MCF 10A (cell line): ENCODE measurements at regions of chr1 and their contacts with region 1.

Region 1: GRCh38 chr1:117758444-117759316 is 152.8 kb downstream of the TENT5C start:
- DNase-seq: peak; percentile 83
- H3K4me3 Mint-ChIP-seq: peak overlapping the region; percentile 76
- H3K27ac Mint-ChIP-seq: no peak overlapping the region
- H3K4me1 Mint-ChIP-seq: peaks cover 11% of the 10 kb centered on the region
- H3K27me3 Mint-ChIP-seq: no peaks in the 10 kb centered on the region
- CTCF ChIP-seq: peak; percentile 84

Region 2: GRCh38 chr1:117512743-117513321 is 245.8 kb before region 1 on chr1:
- CTCF ChIA-PET with region 1: interaction called, 271 read pairs
- POLR2A ChIA-PET with region 1: interaction called, 3 read pairs
- intact Hi-C with region 1: loop called (anchors 1 kb)
- DNase-seq: peak; percentile 32
- H3K4me3 Mint-ChIP-seq: no peak overlapping the region
- H3K27ac Mint-ChIP-seq: no peak overlapping the region
- H3K4me1 Mint-ChIP-seq: no peaks in the 10 kb centered on the region
- H3K27me3 Mint-ChIP-seq: no peaks in the 10 kb centered on the region
- CTCF ChIP-seq: peak; percentile 53

Region 3: GRCh38 chr1:117605774-117606648 is 152.7 kb before region 1 on chr1 and contains the start of gene TENT5C:
- CTCF ChIA-PET with region 1: interaction called, 29 read pairs
- POLR2A ChIA-PET with region 1: interaction called, 4 read pairs
- intact Hi-C with region 1: loop called (anchors 1 kb)
- DNase-seq: peak; percentile 98
- H3K4me3 Mint-ChIP-seq: peak within 1 kb of the TSS; percentile 97
- H3K27ac Mint-ChIP-seq: peak within 1 kb of the TSS; percentile 42
- H3K4me1 Mint-ChIP-seq: no peaks in the 10 kb centered on the region
- H3K27me3 Mint-ChIP-seq: peaks cover 36% of the 10 kb centered on the region
- CTCF ChIP-seq: no peak
- total RNA-seq, gene TENT5C: 0.05 TPM in 1 of 2 replicates, not detected in the other

Region 4: DNA sequence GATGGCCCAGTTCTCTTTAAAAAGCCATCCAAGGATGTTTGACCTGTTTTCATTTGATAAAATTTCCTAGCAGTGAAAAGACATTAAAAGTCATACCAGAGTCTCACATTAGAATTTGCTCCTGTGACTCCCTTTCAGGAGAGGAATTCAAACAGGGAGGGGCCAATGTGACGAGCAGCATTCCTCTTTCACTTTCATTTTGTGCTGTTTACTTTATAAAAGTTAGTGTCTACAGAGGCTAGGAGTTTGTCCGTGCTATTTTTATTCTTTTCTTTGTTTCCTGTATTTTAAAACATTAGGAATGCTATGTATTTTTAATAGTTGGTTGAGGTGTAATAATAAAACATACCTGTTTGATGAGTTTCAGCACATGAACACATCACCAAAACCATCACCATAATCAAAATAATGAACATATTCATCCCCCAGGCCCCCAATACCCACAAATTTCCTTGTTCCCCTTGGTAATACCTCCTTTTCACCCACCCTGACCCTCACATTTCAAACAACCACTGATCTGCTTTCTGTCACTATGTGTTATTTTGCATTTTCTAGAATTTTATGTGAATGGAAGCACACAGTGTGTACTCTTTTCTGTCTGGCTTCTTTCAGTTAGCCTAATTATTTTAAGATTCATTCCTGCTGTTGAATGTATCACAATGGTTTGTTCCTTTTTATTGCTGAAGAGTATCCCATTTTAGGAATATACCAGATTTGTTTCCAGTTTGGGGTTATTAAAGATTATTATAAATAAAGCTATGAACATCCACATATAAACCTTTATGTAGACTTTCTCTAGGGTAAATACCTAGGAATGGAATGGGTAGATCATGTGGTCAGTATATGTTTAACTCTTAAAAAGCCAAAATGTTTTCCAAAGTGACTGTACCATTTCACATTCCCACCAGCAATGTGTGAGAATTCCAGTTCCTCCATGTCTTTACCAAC is 23.4 kb before region 1 on chr1:
- CTCF ChIA-PET with region 1: interaction called, 17 read pairs
- POLR2A ChIA-PET with region 1: no interaction called
- intact Hi-C with region 1: no loop called
- DNase-seq: peak; percentile 50
- H3K4me3 Mint-ChIP-seq: peak overlapping the region; percentile 66
- H3K27ac Mint-ChIP-seq: peak overlapping the region; percentile 91
- H3K4me1 Mint-ChIP-seq: peaks cover 12% of the 10 kb centered on the region
- H3K27me3 Mint-ChIP-seq: no peaks in the 10 kb centered on the region
- CTCF ChIP-seq: no peak

Region 5: GRCh38 chr1:117770981-117771531 is 12.4 kb after region 1 on chr1:
- CTCF ChIA-PET with region 1: interaction called, 23 read pairs
- POLR2A ChIA-PET with region 1: interaction called, 3 read pairs
- intact Hi-C with region 1: no loop called
- DNase-seq: no peak
- H3K4me3 Mint-ChIP-seq: no peak overlapping the region
- H3K27ac Mint-ChIP-seq: no peak overlapping the region
- H3K4me1 Mint-ChIP-seq: no peaks in the 10 kb centered on the region
- H3K27me3 Mint-ChIP-seq: no peaks in the 10 kb centered on the region
- CTCF ChIP-seq: no peak

Region 6: DNA sequence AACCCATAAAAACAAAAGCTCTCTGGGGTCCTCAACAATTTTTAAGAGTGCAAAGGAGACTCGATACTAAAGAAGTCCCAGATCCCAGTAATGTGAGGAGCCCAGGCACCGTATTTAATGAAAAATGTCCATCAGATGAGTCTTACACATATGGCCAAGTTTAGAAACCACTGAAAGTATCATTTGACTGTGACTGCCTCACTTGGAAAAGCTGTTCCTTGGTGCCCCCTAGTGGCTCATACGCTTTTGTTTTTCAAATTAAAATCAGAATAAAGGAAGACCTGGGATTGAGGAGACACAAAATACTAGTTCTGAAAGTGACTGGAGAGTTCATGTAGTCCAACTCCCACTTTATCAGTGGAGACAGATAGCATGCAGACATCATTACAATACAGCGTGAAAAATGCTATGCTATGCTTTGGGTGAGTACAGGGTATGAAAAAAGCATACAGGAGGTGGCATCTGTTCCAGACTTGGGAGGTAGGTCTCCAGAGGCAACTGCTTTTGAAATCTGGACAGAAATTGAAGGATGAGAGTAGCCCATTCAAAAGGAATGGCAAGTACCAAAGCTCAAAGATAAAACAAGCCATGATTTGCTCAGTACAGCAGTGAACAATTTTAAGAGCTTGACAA is 136.9 kb after region 1 on chr1:
- CTCF ChIA-PET with region 1: interaction called, 35 read pairs
- POLR2A ChIA-PET with region 1: no interaction called
- intact Hi-C with region 1: loop called (anchors 1 kb)
- DNase-seq: peak; percentile 78
- H3K4me3 Mint-ChIP-seq: no peak overlapping the region
- H3K27ac Mint-ChIP-seq: no peak overlapping the region
- H3K4me1 Mint-ChIP-seq: no peaks in the 10 kb centered on the region
- H3K27me3 Mint-ChIP-seq: no peaks in the 10 kb centered on the region
- CTCF ChIP-seq: peak; percentile 69

Region 7: DNA sequence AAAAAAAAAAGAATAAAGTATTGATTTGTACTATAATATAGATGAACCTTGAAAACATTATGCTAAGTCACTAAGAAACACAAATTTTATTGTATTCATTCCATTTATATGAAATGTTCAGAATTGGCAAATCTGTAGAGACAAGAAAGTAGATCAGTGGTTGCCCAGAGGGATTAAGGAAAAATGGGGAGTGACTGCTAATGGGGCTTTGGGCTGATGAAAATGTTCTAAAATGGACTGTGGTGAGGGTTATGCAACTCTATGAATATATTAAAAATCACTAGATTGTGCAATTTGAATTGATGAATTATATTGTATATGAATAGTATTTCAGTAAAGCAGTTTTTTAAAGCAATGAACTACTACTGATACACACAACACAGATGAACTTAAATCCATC is 160.7 kb after region 1 on chr1:
- CTCF ChIA-PET with region 1: no interaction called
- POLR2A ChIA-PET with region 1: no interaction called
- intact Hi-C with region 1: no loop called
- DNase-seq: no peak
- H3K4me3 Mint-ChIP-seq: no peak overlapping the region
- H3K27ac Mint-ChIP-seq: no peak overlapping the region
- H3K4me1 Mint-ChIP-seq: no peaks in the 10 kb centered on the region
- H3K27me3 Mint-ChIP-seq: no peaks in the 10 kb centered on the region
- CTCF ChIP-seq: no peak